Colonic mucosa (tissue), 4 donors: ENCODE measurements at regions of chr6 and their contacts with region 1.

Region 1: DNA sequence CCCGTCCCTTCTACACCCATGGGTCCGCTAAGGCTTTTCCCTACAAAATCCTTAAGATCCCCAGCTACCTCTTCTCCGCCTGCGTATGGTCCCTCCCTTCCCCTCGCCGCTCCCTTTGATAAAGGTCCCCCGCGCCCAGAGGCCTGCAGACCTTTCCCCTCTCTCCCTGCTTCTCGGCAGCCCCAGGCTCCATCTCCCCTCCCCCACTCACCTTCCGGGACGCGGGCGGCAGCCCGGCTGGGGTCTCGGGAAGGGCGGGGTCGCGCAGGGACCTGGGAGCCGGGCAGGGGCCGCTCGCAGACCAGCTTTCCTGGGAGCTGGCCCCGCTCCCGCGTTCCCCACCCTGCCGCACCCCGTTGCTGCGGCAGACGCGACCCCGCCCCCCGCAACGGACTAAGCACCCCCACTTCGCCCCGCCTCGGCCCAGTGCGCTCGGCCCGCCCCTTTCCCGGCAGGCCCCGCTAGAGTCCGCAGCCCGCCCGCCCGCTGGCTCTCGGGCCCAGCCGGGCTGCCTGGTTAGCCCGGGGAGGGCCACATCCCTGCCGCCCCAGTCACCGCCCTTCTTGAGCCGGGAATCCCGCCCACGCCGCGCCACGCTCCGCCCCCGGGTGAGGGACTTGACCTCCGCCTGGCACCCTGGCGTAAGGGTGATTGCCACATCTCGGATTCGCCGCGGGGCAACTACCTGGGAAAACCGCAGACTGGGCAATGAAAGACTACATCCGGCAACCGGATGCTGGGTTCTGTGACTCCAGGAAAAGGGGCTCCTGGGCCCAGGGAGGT is at the start of gene FLOT1:
- DNase-seq: peak; percentile 100
- H3K4me3 ChIP-seq: peak within 1 kb of the TSS; percentile 81
- H3K27ac ChIP-seq: peak within 1 kb of the TSS; percentile 98
- H3K4me1 ChIP-seq: peaks cover 30% of the 10 kb centered on the region
- H3K27me3 ChIP-seq: no peaks in the 10 kb centered on the region
- CTCF ChIP-seq: no peak
- total RNA-seq, gene FLOT1: 130 to 158 TPM

Region 2: GRCh38 chr6:30781743-30782424 is 39.4 kb after region 1 on chr6:
- intact Hi-C with region 1: loop called (anchors 5 kb)
- DNase-seq: peak; percentile 98
- H3K4me3 ChIP-seq: no peak overlapping the region
- H3K27ac ChIP-seq: peak overlapping the region; percentile 87
- H3K4me1 ChIP-seq: peaks cover 36% of the 10 kb centered on the region
- H3K27me3 ChIP-seq: no peaks in the 10 kb centered on the region
- CTCF ChIP-seq: no peak

Region 3: DNA sequence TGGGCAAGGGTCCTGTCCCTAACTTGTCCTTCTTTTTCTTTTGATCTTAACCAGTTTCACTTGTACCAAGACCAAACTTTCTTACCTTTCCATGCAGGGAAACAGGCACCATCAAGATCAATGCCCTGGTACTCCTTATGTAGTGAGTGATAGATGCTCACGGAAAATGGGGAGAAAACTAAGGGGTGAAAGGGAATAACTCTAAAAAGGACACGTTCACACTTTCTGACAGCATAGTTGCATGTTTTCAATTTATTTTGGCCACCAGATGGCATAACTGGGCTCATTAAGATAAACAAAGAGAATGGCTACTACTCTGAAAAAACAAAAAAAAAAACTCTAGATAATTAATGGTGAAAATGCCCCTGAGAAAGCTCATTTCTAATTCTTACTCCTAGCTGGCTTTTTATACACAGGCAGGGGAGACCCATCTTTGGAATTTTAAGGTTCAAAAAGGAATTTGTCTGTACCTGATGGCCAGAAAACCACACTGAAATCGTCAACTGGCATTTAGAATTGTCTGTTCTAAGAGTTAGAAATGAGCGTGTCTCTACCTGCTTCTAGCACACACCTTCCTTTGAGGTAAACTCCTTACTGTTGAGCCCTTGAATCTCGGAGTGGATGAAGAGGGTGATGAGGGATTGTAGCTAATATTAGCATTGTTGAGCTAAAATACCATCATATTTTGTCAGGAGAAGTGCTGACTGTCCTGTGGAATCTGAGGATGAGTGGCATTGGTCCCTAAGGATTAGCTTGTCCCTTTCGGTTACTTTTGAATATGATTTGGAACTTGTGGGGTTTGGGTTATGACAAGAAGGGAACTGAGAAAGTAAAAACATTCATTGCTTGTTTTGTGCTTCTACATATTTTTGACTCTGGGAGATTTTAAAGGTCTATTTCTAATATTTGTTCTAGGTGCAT is 79.6 kb after region 1 on chr6:
- intact Hi-C with region 1: loop called (anchors 5 kb)
- DNase-seq: no peak
- H3K4me3 ChIP-seq: no peak overlapping the region
- H3K27ac ChIP-seq: no peak overlapping the region
- H3K4me1 ChIP-seq: peaks cover 19% of the 10 kb centered on the region
- H3K27me3 ChIP-seq: no peaks in the 10 kb centered on the region
- CTCF ChIP-seq: peak; percentile 40

Region 4: DNA sequence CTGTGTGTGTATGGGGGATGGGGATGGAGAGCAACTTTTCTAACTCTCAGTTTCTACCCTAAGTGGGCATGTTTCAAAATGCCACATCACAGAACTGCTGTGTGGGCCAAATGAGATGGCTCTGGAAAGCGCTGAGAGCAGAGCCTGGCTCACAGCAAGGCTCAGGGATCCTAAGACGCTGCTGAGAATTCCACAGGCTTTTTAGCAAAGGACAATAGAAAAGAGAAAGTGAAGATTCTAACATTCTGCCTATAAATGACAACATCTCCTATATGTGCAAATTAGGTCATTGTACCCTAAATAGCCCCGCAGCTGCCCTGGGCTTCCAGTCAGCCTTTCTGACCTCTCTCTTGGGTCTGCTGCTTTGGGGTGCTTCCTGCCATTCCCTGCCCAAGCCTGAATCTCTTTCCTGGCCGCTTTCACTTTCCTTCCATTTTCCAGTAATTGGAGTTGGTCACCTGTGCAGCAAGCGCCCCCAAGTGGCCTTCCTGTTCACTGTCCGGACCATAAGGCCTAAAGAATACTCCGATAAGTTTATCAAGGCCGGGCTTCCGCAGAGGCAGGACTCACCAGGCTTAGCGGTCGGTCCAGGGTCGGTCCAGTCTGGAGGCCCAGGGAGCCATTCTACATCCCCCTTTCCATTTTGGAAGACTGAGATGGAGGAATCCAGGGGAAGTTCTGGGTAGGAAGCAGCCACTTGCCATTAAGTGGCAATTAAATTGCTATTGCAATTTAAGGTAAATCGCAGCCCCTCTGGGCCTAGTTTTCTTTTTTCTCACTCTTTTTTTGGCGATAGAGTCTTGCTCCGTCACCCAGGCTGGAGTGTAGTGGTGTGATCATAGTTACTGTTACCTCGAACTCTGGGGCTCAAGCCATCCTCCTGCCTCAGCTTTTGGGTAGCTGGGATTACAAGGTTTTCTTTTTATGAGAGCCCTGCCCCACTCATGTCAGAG is 135.2 kb after region 1 on chr6:
- intact Hi-C with region 1: loop called (anchors 5 kb)
- DNase-seq: peak; percentile 94
- H3K4me3 ChIP-seq: peak overlapping the region; percentile 10
- H3K27ac ChIP-seq: peak overlapping the region; percentile 71
- H3K4me1 ChIP-seq: peaks cover 7% of the 10 kb centered on the region
- H3K27me3 ChIP-seq: no peaks in the 10 kb centered on the region
- CTCF ChIP-seq: peak; percentile 73